ENCODE measurements at regions of chr1 and their contacts with region 1.

Region 1: DNA sequence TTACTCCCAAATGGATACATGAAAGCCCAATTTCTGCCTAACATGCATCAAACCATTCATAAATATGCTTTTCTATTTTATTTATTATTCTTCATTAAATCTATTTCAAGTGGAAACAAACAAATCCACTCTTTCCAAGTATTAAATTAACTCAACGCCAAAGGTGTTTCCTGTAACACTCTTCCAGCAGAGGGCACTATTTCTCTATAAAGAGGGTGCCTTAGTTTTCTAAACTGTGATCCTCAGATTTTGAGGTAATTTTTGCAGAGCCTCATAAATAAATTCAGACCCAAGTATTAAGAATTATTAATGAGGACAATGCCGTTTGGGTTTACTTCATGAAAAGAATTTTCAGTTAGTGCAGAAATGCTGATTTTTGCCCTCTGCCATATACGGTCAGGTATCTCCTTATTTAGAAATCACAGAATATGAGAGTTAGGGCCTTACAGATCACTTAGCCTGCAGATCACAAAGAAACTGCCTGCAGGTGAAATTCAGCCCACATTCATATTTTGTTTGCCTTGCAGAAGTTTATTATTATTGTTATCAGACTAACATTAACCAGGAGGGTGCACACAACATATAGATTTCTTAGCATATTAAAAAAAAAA is 40.1 kb upstream of the MYSM1 start:
- DNase-seq: peak in 1 of 2 experiments; percentile 57
- H3K4me3 ChIP-seq: no peak overlapping the region
- H3K4me3 Mint-ChIP-seq: no peak overlapping the region
- H3K27ac Mint-ChIP-seq: no peak overlapping the region
- H3K4me1 ChIP-seq: no peaks in the 10 kb centered on the region
- H3K4me1 Mint-ChIP-seq: no peaks in the 10 kb centered on the region
- H3K27me3 ChIP-seq: no peaks in the 10 kb centered on the region
- H3K27me3 Mint-ChIP-seq: no peaks in the 10 kb centered on the region
- CTCF ChIP-seq: peak; percentile 65

Region 2: GRCh38 chr1:58477390-58477789 is 262.6 kb before region 1 on chr1:
- CTCF ChIA-PET with region 1: no interaction called
- POLR2A ChIA-PET with region 1: no interaction called
- intact Hi-C with region 1: no loop called
- DNase-seq: no peak
- H3K4me3 ChIP-seq: no peak overlapping the region
- H3K4me3 Mint-ChIP-seq: no peak overlapping the region
- H3K27ac Mint-ChIP-seq: no peak overlapping the region
- H3K4me1 ChIP-seq: no peaks in the 10 kb centered on the region
- H3K4me1 Mint-ChIP-seq: no peaks in the 10 kb centered on the region
- H3K27me3 ChIP-seq: no peaks in the 10 kb centered on the region
- H3K27me3 Mint-ChIP-seq: no peaks in the 10 kb centered on the region
- CTCF ChIP-seq: no peak

Region 3: DNA sequence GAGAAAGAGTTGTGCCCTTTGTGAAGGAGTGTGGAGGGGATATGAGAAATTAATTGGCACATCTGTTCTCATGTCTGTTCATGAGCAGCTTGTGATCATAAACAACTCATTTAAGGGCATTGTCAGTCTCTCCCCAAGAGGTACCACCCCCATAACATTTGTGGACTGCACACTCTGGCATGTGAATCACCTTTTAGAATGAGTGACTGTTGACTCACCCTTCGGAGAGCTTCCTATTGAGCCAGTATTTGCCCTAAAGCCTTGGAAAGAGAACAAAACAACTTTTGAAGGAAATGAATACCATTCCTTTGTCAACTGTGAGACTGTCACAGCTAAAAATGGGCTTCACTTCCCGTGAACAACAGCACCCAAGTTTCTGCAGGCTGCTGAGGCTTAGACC is 12.6 kb before region 1 on chr1:
- CTCF ChIA-PET with region 1: no interaction called
- POLR2A ChIA-PET with region 1: no interaction called
- intact Hi-C with region 1: no loop called
- DNase-seq: no peak
- H3K4me3 ChIP-seq: no peak overlapping the region
- H3K4me3 Mint-ChIP-seq: no peak overlapping the region
- H3K27ac Mint-ChIP-seq: no peak overlapping the region
- H3K4me1 ChIP-seq: no peaks in the 10 kb centered on the region
- H3K4me1 Mint-ChIP-seq: no peaks in the 10 kb centered on the region
- H3K27me3 ChIP-seq: no peaks in the 10 kb centered on the region
- H3K27me3 Mint-ChIP-seq: no peaks in the 10 kb centered on the region
- CTCF ChIP-seq: no peak

Region 4: GRCh38 chr1:58768971-58769808 is 29.2 kb after region 1 on chr1:
- CTCF ChIA-PET with region 1: interaction called, 8 read pairs
- POLR2A ChIA-PET with region 1: no interaction called
- intact Hi-C with region 1: loop called (anchors 1 kb)
- DNase-seq: peak; percentile 46 to 73
- H3K4me3 ChIP-seq: no peak overlapping the region
- H3K4me3 Mint-ChIP-seq: no peak overlapping the region
- H3K27ac Mint-ChIP-seq: no peak overlapping the region
- H3K4me1 ChIP-seq: no peaks in the 10 kb centered on the region
- H3K4me1 Mint-ChIP-seq: no peaks in the 10 kb centered on the region
- H3K27me3 ChIP-seq: no peaks in the 10 kb centered on the region
- H3K27me3 Mint-ChIP-seq: no peaks in the 10 kb centered on the region
- CTCF ChIP-seq: peak; percentile 65 to 71

Region 5: DNA sequence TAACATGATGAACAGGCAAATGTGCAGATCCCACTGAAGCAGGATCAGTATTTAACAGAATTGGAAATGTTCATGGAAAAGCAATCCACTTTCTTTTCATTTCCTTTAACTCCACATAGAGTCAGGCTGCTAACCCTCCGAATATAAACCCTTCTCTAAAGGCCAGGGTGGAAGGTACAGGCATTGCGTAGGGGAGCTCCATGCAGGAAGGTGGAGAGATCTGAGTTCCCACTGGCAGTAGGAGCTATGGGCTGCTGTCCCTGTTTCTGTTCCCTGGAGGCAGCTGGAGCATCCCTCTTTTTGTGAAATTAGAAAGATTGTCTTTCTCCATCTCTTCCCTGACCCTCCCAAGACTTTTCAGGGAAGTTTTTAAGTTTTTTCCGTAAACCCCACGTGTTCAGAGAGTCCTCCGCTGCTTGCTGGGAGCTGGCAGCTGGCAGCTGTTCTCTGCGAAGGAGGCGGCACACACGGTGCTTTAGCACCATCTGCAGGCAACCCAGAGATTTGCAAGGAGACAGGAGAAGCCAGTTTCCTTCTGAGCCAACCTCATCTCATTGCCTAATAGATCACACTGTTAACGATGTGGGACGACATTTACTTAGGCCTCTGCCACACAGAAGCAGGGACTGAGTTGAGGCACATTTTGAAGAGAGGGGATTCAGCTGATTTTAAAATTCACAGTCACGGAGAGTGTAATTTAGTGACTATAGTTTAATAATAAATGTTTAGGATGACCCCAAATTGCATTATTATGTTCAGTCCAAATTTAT is 1019.4 kb after region 1 on chr1:
- CTCF ChIA-PET with region 1: no interaction called
- POLR2A ChIA-PET with region 1: no interaction called
- intact Hi-C with region 1: loop called (anchors 1 kb)
- DNase-seq: peak; percentile 54 to 75
- H3K4me3 ChIP-seq: no peak overlapping the region
- H3K4me3 Mint-ChIP-seq: peak overlapping the region; percentile 58
- H3K27ac Mint-ChIP-seq: no peak overlapping the region
- H3K4me1 ChIP-seq: no peaks in the 10 kb centered on the region
- H3K4me1 Mint-ChIP-seq: no peaks in the 10 kb centered on the region
- H3K27me3 ChIP-seq: no peaks in the 10 kb centered on the region
- H3K27me3 Mint-ChIP-seq: no peaks in the 10 kb centered on the region
- CTCF ChIP-seq: peak; percentile 70 to 76

Measured in Caco-2 (cell line).